Left lung (tissue), 14 donors: ENCODE measurements at regions of chr3 and their contacts with region 1.

Region 1: DNA sequence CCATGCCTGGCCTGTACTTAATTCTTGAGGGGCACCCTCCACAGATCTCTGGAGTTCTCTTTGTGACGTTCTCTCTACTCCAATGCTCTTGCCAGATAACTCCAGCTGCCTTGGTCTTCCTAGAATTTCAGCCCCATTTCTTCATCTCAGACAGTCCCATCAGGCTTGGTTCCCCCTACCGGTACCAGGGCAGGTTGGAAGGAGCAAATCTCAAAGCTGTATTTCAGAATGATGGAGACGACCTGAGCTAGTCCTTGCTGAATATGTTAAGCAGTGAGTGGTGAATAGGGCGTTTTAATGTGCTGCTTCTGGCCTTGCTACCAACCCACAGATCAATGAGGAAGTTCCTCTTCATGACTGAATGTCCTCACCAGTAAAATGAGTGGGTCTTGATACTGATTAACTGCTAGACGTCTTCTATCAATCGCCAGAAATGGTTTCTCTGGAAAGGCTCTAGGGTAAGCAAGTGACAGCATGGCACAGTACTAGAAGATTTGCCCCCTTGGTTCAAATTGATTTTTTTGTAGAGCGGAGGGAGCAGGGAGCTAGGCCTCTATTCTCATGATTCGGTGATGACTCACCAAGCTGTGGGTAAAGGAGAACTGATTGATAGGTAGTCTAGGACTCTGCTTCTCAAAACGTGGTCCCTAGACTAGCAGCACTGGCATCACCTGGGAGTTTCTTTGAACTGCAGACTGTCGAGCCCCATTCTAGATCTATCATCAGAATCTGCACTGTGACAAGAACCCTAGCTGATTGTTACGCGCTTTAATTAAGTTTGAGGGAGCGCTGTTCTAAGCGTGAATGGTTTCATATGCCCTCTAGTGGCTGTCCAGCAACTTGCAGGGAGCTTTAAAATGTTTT is 67.8 kb downstream of the UBP1 start:
- DNase-seq: peak in 2 of 4 donors; percentile 42 to 54
- ATAC-seq: peak; percentile 93
- H3K4me3 ChIP-seq: no peak overlapping the region
- H3K27ac ChIP-seq: no peak overlapping the region
- H3K4me1 ChIP-seq: no peaks in the 10 kb centered on the region
- H3K27me3 ChIP-seq: no peaks in the 10 kb centered on the region
- CTCF ChIP-seq: peak; percentile 72 to 91

Region 2: GRCh38 chr3:33131331-33132018 is 241.0 kb before region 1 on chr3:
- intact Hi-C with region 1: loop called in 1 of 2 experiments (anchors 5 kb)
- DNase-seq: peak in 2 of 4 donors; percentile 38 to 66
- ATAC-seq: peak; percentile 93
- H3K4me3 ChIP-seq: no peak overlapping the region
- H3K27ac ChIP-seq: no peak overlapping the region
- H3K4me1 ChIP-seq: no peaks in the 10 kb centered on the region
- H3K27me3 ChIP-seq: no peaks in the 10 kb centered on the region
- CTCF ChIP-seq: peak; percentile 50 to 70

Region 3: DNA sequence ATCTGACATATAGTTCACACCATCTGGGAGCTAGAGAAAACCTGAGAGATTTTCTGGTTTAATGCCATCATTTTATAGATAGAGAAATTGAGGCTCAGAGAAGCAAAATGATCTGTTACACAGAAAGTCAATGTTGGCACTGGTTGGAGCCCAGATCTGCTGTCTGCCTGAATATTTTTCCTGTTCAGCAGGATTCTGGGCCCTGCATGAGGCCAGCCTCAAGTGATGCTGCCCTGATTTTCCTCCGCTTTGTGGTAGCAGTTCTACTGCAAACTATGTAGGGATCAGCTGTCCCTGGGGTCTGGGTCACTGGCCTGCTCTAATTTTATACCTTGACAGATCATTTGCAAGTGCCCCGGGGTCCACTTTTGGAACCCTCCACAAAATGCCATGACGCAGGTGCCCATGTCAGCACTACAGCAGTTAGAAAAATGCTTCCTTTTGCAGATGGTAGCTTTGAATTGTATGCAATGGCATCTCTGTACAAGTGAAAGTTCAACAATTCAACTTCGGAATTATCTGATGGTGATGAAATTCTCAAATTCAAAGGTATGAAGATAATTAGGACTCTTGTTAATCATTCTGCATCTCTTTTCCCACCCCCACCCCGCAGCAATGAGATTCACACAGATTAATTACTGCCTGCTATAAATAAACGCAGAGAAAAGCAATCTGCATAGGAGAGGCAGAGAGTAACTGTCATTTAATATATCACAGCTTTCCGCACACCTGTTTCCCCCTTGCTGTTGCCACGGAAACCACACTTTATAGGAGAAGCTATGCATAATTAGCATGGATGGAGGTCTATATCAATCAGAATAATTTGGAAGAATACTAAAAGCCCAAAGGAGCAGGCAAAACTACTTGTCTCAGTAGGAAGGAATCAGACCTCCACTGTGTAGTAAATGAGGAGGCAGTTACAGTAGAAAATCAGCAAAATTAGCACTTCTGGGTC is 648.6 kb after region 1 on chr3:
- intact Hi-C with region 1: no loop called
- DNase-seq: no peak
- ATAC-seq: no peak
- H3K4me3 ChIP-seq: no peak overlapping the region
- H3K27ac ChIP-seq: no peak overlapping the region
- H3K4me1 ChIP-seq: peaks cover 0 to 3% of the 10 kb centered on the region in 2 donors
- H3K27me3 ChIP-seq: no peaks in the 10 kb centered on the region
- CTCF ChIP-seq: no peak